ENCODE measurements at regions of chr11 and their contacts with region 1.

Region 1: GRCh38 chr11:9460322-9461067 is at the start of gene ZNF143:
- DNase-seq: peak; percentile 99
- ATAC-seq: peak; percentile 89
- H3K4me3 ChIP-seq: peak within 1 kb of the TSS; percentile 81
- H3K27ac ChIP-seq: peak within 1 kb of the TSS; percentile 98
- H3K4me1 ChIP-seq: peaks cover 18% of the 10 kb centered on the region
- H3K27me3 ChIP-seq: no peaks in the 10 kb centered on the region
- CTCF ChIP-seq: no peak
- total RNA-seq, gene ZNF143: 21.8 and 33.9 TPM in 2 replicates

Region 2: DNA sequence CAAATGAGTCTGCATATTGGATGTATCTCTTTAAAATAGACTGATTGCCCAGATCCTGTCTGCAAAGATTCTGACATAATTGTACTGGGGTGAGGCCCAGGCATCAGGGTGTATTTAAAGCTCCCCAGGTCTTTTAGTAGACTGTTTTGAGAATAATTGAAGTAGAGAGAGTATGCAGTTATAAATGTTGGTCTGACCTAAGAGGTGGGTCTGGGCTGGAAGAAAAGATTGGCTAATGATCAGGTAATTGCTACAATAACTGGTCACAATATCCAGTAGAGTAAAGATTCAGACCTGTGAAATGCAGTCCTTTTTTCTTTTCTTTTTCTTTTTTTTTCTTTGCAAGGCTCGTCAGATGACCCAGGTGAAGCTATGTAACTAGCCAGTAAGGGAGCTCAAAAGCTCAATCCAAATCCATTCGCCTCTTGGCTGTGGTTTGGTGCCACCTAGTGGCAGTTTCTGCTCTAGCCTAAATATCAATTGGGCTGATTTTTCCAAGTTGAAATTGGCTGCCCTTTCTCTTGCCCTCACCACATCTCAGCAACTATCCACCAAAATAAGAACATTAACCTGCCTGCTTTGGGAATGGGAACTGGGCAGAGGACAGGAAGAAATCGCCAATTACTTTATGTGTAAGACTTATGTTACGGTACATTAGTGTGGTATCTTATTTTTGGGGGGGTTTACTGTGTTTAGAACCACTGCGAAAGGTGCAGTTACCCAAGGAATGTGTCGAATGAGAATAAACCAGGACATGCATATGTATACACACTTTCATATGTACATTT is 46.2 kb after region 1 on chr11:
- CTCF ChIA-PET with region 1: interaction called, 5 read pairs
- POLR2A ChIA-PET with region 1: interaction called, 4 read pairs
- intact Hi-C with region 1: loop called (anchors 2 kb)
- DNase-seq: peak; percentile 90
- ATAC-seq: peak; percentile 88
- H3K4me3 ChIP-seq: no peak overlapping the region
- H3K27ac ChIP-seq: no peak overlapping the region
- H3K4me1 ChIP-seq: no peaks in the 10 kb centered on the region
- H3K27me3 ChIP-seq: no peaks in the 10 kb centered on the region
- CTCF ChIP-seq: peak; percentile 91

Region 3: GRCh38 chr11:9518835-9519410 is 58.4 kb after region 1 on chr11:
- CTCF ChIA-PET with region 1: no interaction called
- POLR2A ChIA-PET with region 1: no interaction called
- intact Hi-C with region 1: no loop called
- DNase-seq: no peak
- ATAC-seq: no peak
- H3K4me3 ChIP-seq: no peak overlapping the region
- H3K27ac ChIP-seq: no peak overlapping the region
- H3K4me1 ChIP-seq: no peaks in the 10 kb centered on the region
- H3K27me3 ChIP-seq: no peaks in the 10 kb centered on the region
- CTCF ChIP-seq: no peak

Region 4: GRCh38 chr11:9565822-9566560 is 105.5 kb after region 1 on chr11:
- CTCF ChIA-PET with region 1: no interaction called
- POLR2A ChIA-PET with region 1: no interaction called
- intact Hi-C with region 1: loop called (anchors 2 kb)
- DNase-seq: peak; percentile 99
- ATAC-seq: peak; percentile 83
- H3K4me3 ChIP-seq: peak overlapping the region; percentile 48; the same call in 1 of the 2 replicates
- H3K27ac ChIP-seq: peak overlapping the region; percentile 98
- H3K4me1 ChIP-seq: peaks cover 65% of the 10 kb centered on the region
- H3K27me3 ChIP-seq: no peaks in the 10 kb centered on the region
- CTCF ChIP-seq: no peak

Region 5: DNA sequence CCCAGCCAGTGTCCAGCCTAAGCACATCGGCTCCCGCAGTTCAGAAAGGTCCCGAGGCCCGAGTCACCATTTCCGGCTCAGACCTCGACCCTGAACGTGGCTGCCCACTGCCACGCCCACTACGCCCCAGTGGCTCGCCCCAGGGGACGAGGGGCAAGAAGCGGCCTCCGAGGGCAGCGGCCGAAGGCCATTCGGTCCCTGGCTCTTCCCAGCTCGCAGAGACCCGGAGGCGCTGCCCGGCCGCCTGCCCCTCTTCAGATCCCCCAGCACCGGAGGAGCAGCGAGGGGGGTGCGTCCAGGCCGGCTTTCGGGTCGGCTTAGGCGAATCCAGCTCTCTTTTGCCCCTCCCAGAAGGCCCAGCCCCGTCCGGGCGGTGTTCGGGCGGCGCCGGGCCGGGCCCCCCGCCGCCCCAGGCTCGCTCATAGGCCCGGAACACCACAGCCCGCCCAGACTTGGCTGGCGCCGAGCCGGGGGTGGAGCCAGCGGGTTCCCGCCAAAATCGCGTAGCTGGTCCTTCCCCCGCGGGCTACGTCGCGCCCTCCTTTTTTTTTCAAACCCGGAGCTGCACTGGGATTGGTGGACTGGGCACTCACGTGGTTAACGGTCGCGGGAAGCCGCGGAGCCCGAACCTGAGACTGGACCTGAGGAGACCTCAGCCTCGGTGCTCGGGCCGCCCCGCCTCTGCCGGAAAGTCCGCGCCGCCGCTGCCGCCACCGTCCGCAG is 112.7 kb after region 1 on chr11 and contains the start of gene WEE1:
- CTCF ChIA-PET with region 1: interaction called, 3 read pairs
- POLR2A ChIA-PET with region 1: interaction called, 14 read pairs
- intact Hi-C with region 1: no loop called
- DNase-seq: peak; percentile 98
- ATAC-seq: peak; percentile 80
- H3K4me3 ChIP-seq: peak within 1 kb of the TSS; percentile 84
- H3K27ac ChIP-seq: peak within 1 kb of the TSS; percentile 90
- H3K4me1 ChIP-seq: peaks cover 48% of the 10 kb centered on the region
- H3K27me3 ChIP-seq: no peaks in the 10 kb centered on the region
- CTCF ChIP-seq: no peak
- total RNA-seq, gene WEE1: 45.1 and 46.9 TPM in 2 replicates

Measured in PC-3 (cell line).